Left colon (tissue), 2 donors: ENCODE measurements at regions of chr11 and their contacts with region 1.

Region 1: GRCh38 chr11:18634140-18635032 is at the start of gene SPTY2D1:
- DNase-seq: peak; percentile 99
- ATAC-seq: peak; percentile 99
- total RNA-seq, gene SPTY2D1: 19.9 to 20.2 TPM

Region 2: GRCh38 chr11:18698341-18699268 is 64.2 kb after region 1 on chr11 and contains the start of gene TMEM86A:
- intact Hi-C with region 1: loop called in 1 of 2 experiments (anchors 10 kb)
- DNase-seq: peak; percentile 91 to 95
- ATAC-seq: peak; percentile 97
- total RNA-seq, gene TMEM86A: 2.0 to 3.3 TPM